HEK293T (cell line): ENCODE measurements at regions of chr21 and their contacts with region 1.

Region 1: DNA sequence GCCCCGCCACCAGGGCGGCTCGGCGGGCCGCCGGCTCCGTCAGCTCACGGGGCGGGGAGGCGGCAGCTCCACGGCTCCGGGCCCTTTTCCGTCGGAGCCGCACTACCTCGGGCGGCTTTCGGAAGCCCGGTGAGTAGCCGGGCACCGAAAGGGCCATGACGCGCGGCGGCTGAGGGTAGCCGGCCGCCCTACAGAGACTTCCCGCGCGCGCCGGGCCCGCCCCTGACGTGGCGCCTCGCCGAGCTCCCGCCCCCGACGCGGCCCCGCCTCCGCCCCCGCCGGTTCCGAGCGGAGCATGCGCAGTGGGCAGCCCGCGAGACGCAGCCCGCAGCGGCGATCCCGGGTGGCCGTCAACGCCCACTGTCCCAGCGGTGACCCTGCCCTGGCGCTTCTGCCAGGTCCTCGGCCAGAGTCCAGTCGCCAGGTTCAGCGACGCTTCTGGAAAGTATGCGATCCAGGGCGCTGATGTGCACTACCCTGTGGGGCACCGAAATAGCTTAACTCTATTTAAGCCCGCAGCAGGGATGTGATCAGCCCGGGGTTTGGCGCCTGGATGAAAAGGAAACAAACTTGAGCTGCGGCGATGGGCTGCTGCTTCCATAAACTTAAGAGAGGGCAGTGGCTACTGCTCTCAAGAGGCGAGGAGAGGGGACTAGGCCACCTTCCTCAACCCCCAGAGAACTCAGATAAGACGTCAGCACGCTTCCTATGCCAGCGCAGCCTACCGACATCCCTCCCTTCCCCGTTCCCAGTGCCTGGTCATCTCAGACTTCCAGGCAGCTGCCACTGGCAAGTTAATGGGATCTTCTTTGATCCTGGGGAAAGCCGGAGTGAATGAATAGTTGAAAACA is at the start of gene DONSON:
- DNase-seq: peak; percentile 99

Region 2: DNA sequence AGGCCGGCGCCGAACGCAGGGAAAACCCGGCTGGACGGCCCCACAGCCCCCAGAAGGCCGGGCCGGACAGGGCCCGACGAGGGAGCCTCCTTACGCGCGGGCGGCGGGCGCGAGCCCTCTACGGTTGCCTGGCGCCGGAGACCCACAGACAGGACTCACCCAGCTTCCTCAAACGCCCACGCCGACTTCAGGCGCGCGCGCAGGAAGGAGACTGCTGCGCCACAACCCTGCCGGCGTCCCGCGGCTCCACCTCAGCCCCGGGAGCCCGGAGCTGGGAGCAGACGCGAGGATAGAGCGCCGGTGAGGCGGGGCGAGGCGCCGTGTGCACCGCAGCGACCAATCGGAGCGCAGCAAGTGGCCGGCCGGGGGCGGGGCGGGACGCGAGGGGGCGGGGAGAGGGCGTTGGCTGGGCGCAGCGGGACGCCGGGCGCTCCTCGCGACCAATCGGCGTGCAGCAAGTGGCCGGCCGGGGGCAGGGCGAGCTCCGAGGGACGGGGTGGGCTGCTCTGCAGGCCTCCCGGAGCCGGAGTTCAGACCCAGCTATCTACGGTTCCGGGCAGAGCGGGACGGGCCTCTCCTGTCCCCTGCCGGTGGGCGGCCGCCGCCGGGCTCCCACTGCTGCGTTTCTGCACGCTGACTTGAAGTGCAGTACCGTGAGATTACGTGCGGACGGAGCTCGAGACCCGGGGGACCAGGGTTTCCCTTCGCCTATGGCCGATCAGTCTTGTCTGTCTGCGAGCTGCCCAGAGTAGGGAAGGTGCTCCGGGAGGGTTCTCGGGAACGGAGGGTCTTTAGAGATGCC is 108.8 kb before region 1 on chr21 and contains the start of gene TMEM50B:
- CTCF ChIA-PET with region 1: no interaction called
- POLR2A ChIA-PET with region 1: interaction called, 14 read pairs
- DNase-seq: peak; percentile 97

Region 3: GRCh38 chr21:33608559-33608958 is 19.8 kb after region 1 on chr21:
- CTCF ChIA-PET with region 1: interaction called, 16 read pairs
- POLR2A ChIA-PET with region 1: interaction called, 7 read pairs
- DNase-seq: no peak

Region 4: DNA sequence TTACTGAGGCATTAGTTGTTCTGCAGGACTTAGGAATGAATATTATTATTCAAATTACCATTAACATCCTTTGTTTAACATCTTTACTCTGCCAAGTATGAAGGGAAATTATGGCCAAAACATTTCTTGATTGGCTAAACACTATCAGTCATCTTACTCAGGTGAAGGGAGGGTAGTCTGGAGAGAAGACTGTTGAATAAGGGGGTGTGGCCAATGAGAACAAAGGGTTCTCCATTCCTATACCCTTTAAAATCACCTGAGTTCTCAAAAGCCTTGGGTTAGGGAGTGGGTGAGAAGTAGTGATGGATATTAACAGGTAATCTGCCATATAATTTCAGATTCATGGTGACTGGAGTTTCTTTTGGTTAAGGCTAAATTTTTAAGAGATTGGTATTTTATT is 33.5 kb after region 1 on chr21:
- CTCF ChIA-PET with region 1: no interaction called
- POLR2A ChIA-PET with region 1: no interaction called
- DNase-seq: no peak

Region 5: DNA sequence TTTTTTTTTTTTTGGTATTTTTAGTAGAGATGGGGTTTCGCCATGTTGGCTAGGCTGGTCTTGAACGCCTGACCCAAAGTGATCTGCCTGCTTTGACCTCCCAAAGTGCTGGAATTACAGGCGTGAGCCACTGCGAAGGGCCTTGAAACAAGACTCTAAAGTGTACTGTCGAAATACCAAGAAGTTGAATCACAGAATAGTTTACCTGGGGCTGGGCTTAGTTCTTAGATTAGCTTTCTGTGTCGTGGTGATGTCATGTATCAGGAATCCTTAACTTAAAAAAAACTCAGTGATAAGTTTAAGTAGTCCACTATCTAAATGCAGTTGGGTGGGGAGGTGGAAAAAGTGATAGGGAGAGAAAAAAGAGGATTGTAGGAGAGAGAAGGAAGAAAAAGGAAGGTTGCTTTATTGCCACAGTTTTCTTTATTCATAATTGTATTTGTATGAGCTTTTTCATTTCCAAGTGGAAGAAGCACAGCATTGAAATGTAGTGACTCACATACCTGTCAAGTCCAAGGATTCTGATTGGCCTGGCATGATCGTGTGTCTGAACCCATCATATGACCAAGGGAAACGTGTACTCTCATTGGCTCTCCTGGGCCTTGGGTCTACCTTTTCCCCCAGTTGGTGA is 67.0 kb after region 1 on chr21:
- CTCF ChIA-PET with region 1: no interaction called
- POLR2A ChIA-PET with region 1: no interaction called
- DNase-seq: peak; percentile 20

Region 6: GRCh38 chr21:33698087-33698860 is 109.6 kb after region 1 on chr21:
- CTCF ChIA-PET with region 1: no interaction called
- POLR2A ChIA-PET with region 1: no interaction called
- DNase-seq: no peak